ENCODE measurements at regions of chr1 and their contacts with region 1.

Region 1: GRCh38 chr1:201254625-201255506 is 28.4 kb upstream of the PKP1 start:
- DNase-seq: peak in 2 of 3 donors; percentile 73 to 79
- ATAC-seq: peak; percentile 80
- H3K4me3 ChIP-seq: no peak overlapping the region
- H3K4me1 ChIP-seq: peaks cover 7% of the 10 kb centered on the region
- CTCF ChIP-seq: peak; percentile 95

Region 2: DNA sequence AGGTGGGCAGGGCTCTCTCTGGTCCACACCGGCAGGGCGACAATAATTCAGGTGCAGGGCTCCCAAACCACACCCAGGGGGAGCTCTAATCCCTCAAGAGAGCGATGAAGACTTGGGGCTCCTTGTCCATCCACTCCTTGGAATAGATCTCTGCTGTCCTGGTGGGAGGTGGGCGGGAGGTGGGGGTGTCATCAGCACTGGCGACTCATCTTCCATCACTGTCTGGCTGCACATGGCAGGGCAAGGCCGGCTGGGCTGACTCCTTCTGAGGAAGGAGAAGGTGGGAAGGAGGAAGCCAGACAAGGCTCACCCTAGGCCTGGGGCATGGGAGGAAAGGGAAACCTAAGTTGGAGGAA is 93.3 kb after region 1 on chr1:
- intact Hi-C with region 1: loop called in 1 of 2 experiments (anchors 5 kb)
- DNase-seq: peak in 2 of 3 donors; percentile 42 to 47
- ATAC-seq: peak; percentile 75
- H3K4me3 ChIP-seq: no peak overlapping the region
- H3K4me1 ChIP-seq: no peaks in the 10 kb centered on the region
- CTCF ChIP-seq: no peak

Region 3: GRCh38 chr1:201361652-201362504 is 107.0 kb after region 1 on chr1:
- intact Hi-C with region 1: loop called (anchors 2 to 5 kb)
- DNase-seq: peak in 2 of 3 donors; percentile 47 to 49
- ATAC-seq: peak; percentile 53
- H3K4me3 ChIP-seq: no peak overlapping the region
- H3K4me1 ChIP-seq: no peaks in the 10 kb centered on the region
- CTCF ChIP-seq: peak; percentile 68

Measured in mucosa of descending colon (tissue), 3 donors.